B cell (primary cell): ENCODE measurements at regions of chr16 and their contacts with region 1.

Region 1: GRCh38 chr16:27235055-27235937 is 32.0 kb downstream of the KDM8 start:
- DNase-seq: peak; percentile 77
- ATAC-seq: peak; percentile 13
- H3K4me3 ChIP-seq: peak overlapping the region; percentile 8 to 48 (median 32)
- H3K4me3 Mint-ChIP-seq: peak overlapping the region; percentile 81
- H3K27ac ChIP-seq: peak overlapping the region; percentile 91 to 92
- H3K27ac Mint-ChIP-seq: peak overlapping the region; percentile 93
- H3K4me1 ChIP-seq: peaks cover 83 to 94% of the 10 kb centered on the region in 2 donors
- H3K4me1 Mint-ChIP-seq: peaks cover 85% of the 10 kb centered on the region
- H3K27me3 ChIP-seq: no peaks in the 10 kb centered on the region
- H3K27me3 Mint-ChIP-seq: no peaks in the 10 kb centered on the region
- CTCF ChIP-seq: peak; percentile 85

Region 2: DNA sequence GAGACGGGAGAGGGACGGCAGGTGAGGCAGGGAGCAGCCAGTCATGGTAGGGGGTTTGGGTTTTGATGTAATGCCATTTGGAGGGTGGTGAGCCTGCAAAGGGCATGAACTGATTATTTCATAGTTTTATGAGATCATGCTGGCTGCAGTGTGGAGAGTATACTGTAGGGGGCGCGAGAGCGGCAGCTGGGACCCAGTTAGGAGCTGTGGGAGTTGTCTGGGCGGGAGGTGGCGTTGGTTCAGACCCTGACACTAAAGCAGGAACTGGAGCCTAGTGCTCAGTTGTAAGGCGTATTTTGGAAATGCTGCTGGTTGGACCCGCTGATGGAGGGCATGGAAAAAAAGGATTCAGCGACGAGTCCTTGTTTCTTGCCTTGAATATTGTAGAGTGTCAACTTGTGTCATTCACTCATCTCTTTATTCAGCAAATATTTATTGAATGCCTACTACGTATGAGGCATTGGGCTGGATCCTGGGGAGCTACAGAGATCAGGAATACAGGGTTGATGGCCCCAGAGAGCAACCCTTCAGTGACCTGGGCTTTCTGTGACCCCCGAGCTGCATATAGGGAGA is 55.7 kb before region 1 on chr16:
- CTCF ChIA-PET with region 1: interaction called, 67 read pairs
- POLR2A ChIA-PET with region 1: interaction called, 9 read pairs
- intact Hi-C with region 1: loop called (anchors 5 kb)
- DNase-seq: peak; percentile 87
- ATAC-seq: peak; percentile 100
- H3K4me3 ChIP-seq: no peak overlapping the region
- H3K4me3 Mint-ChIP-seq: no peak overlapping the region
- H3K27ac ChIP-seq: no peak overlapping the region
- H3K27ac Mint-ChIP-seq: peak overlapping the region; percentile 10
- H3K4me1 ChIP-seq: peaks cover 16 to 26% of the 10 kb centered on the region in 2 donors
- H3K4me1 Mint-ChIP-seq: peaks cover 17% of the 10 kb centered on the region
- H3K27me3 ChIP-seq: no peaks in the 10 kb centered on the region
- H3K27me3 Mint-ChIP-seq: no peaks in the 10 kb centered on the region
- CTCF ChIP-seq: peak; percentile 84

Region 3: GRCh38 chr16:27253526-27253930 is 18.2 kb after region 1 on chr16:
- CTCF ChIA-PET with region 1: interaction called, 19 read pairs
- POLR2A ChIA-PET with region 1: interaction called, 16 read pairs
- intact Hi-C with region 1: loop called (anchors 1 kb)
- DNase-seq: no peak
- ATAC-seq: no peak
- H3K4me3 ChIP-seq: no peak overlapping the region
- H3K4me3 Mint-ChIP-seq: peak overlapping the region; percentile 57
- H3K27ac ChIP-seq: peak overlapping the region in 1 of 2 donors; percentile 66
- H3K27ac Mint-ChIP-seq: peak overlapping the region; percentile 88
- H3K4me1 ChIP-seq: peaks cover 21 to 27% of the 10 kb centered on the region in 2 donors
- H3K4me1 Mint-ChIP-seq: peaks cover 41% of the 10 kb centered on the region
- H3K27me3 ChIP-seq: no peaks in the 10 kb centered on the region
- H3K27me3 Mint-ChIP-seq: no peaks in the 10 kb centered on the region
- CTCF ChIP-seq: no peak

Region 4: GRCh38 chr16:27298132-27298531 is 62.8 kb after region 1 on chr16:
- CTCF ChIA-PET with region 1: interaction called, 17 read pairs
- POLR2A ChIA-PET with region 1: no interaction called
- intact Hi-C with region 1: no loop called
- DNase-seq: peak; percentile 35
- ATAC-seq: peak; percentile 25
- H3K4me3 ChIP-seq: peak overlapping the region in 2 of 5 experiments; percentile 1 to 16
- H3K4me3 Mint-ChIP-seq: peak overlapping the region; percentile 20
- H3K27ac ChIP-seq: peak overlapping the region; percentile 67 to 74
- H3K27ac Mint-ChIP-seq: peak overlapping the region; percentile 88
- H3K4me1 ChIP-seq: peaks cover 78 to 79% of the 10 kb centered on the region in 2 donors
- H3K4me1 Mint-ChIP-seq: peaks cover 67% of the 10 kb centered on the region
- H3K27me3 ChIP-seq: no peaks in the 10 kb centered on the region
- H3K27me3 Mint-ChIP-seq: peaks cover 3% of the 10 kb centered on the region
- CTCF ChIP-seq: no peak

Region 5: DNA sequence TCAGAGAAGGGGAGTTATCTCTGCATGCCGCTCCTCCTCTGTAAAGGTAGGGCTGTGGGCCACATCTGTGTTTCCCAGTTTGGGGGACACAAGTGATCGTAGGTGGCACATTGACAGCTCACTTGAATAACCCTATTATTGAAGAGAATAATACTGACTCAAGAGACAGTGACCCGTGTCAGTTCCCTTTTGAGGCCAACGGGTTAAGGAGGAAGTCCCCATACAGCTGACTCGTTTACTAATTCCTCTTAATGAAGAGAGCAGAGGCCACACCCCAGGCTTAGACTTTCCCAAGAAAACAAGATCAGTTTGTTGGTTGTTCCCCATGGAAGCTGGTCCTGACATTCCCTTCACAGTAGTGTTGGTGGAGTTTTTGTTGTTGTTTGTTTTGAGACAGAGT is 111.5 kb after region 1 on chr16:
- CTCF ChIA-PET with region 1: interaction called, 12 read pairs
- POLR2A ChIA-PET with region 1: no interaction called
- intact Hi-C with region 1: no loop called
- DNase-seq: peak; percentile 52
- ATAC-seq: peak; percentile 76
- H3K4me3 ChIP-seq: no peak overlapping the region
- H3K4me3 Mint-ChIP-seq: peak overlapping the region; percentile 54
- H3K27ac ChIP-seq: peak overlapping the region; percentile 39 to 79
- H3K27ac Mint-ChIP-seq: peak overlapping the region; percentile 89
- H3K4me1 ChIP-seq: peaks cover 21 to 31% of the 10 kb centered on the region in 2 donors
- H3K4me1 Mint-ChIP-seq: peaks cover 33% of the 10 kb centered on the region
- H3K27me3 ChIP-seq: no peaks in the 10 kb centered on the region
- H3K27me3 Mint-ChIP-seq: no peaks in the 10 kb centered on the region
- CTCF ChIP-seq: no peak

Region 6: GRCh38 chr16:27449434-27450195 is 214.3 kb after region 1 on chr16:
- CTCF ChIA-PET with region 1: interaction called, 54 read pairs
- POLR2A ChIA-PET with region 1: interaction called, 3 read pairs
- intact Hi-C with region 1: no loop called
- DNase-seq: peak; percentile 93
- ATAC-seq: peak; percentile 77
- H3K4me3 ChIP-seq: peak overlapping the region in 1 of 5 experiments; percentile 17
- H3K4me3 Mint-ChIP-seq: peak overlapping the region; percentile 91
- H3K27ac ChIP-seq: peak overlapping the region; percentile 79 to 82
- H3K27ac Mint-ChIP-seq: peak overlapping the region; percentile 98
- H3K4me1 ChIP-seq: peaks cover 56 to 76% of the 10 kb centered on the region in 2 donors
- H3K4me1 Mint-ChIP-seq: peaks cover 76% of the 10 kb centered on the region
- H3K27me3 ChIP-seq: no peaks in the 10 kb centered on the region
- H3K27me3 Mint-ChIP-seq: no peaks in the 10 kb centered on the region
- CTCF ChIP-seq: no peak